Activated T-helper 2 cell treated with anti-CD3 and anti-CD28 coated beads, Interferon-gamma antibody, Interleukin-2, Interleukin-4, amounts not matched to agents 10 μg/mL and 5 μg/mL and 100 μg/mL, durations not matched to agents 14 hours and 24 hours and 36 hours (primary cell): ENCODE measurements at regions of chr20 and their contacts with region 1.

Region 1: DNA sequence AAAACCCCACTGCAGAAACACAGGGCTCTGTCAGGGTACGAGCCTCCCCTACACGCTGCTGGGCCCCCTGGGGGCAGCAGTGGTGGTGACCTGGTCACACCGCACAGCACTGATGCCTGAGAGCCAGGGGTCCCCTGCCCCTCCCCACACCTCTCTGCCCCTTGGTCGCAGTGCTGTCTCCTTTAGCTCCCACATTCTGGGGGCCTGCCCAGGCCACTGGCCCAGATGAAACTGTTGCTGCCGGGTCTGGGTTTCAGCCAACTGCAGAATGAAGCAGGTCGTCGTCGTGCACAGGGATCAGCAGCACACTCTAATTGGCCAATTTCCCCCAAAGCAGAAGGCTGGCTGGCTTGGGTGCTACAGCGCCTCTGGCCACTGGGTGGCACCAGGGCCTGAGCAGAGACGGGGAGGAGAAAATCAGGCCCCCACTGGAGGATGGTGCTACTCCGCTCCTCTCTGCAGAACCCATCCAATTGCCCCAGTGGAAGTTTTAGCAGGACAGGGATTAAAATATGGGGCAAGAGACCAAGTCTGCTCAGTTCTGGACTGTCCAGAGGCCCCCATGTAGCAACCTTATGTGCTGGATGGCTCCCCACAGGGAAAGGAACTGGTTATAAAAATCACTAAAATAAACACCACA is 26.1 kb downstream of the DIDO1 start:
- DNase-seq: peak; percentile 62
- H3K4me3 Mint-ChIP-seq: peak overlapping the region; percentile 47
- H3K27ac Mint-ChIP-seq: peak overlapping the region; percentile 62
- H3K4me1 Mint-ChIP-seq: peaks cover 27% of the 10 kb centered on the region
- H3K27me3 Mint-ChIP-seq: no peaks in the 10 kb centered on the region

Region 2: DNA sequence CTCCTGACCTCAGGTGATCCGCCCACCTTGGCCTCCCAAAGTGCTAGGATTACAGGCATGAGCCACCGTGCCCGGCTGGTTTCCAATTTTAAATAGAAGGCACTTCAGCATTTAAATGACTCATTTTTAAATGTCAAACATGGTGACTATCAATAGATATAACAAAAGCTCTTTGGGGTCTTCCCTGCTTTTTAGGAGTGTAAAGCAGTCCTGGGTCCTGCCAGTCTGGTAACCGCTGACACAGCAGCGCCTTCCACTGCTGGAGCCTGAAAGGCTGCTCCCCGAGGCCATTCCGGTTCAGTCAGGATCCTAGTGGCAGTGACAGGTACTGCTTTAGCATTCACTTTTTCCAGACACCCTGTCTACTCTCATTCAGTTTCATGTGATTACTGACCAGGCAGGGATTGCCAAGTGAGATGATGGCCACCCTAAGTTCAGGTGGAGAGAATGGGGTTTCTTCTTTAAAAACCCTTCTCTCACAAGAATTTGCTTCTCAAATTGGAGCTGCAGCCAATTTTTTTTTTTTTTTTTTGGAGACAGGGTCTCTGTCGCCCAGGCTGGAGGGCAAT is 21.0 kb after region 1 on chr20:
- intact Hi-C with region 1: loop called (anchors 1 kb)
- DNase-seq: peak; percentile 45
- H3K4me3 Mint-ChIP-seq: peak overlapping the region; percentile 61
- H3K27ac Mint-ChIP-seq: peak overlapping the region; percentile 86
- H3K4me1 Mint-ChIP-seq: peaks cover 65% of the 10 kb centered on the region
- H3K27me3 Mint-ChIP-seq: no peaks in the 10 kb centered on the region

Region 3: GRCh38 chr20:62926239-62927104 is 26.3 kb after region 1 on chr20 and contains the start of gene DIDO1:
- intact Hi-C with region 1: loop called (anchors 1 kb)
- DNase-seq: peak; percentile 86
- H3K4me3 Mint-ChIP-seq: peak within 1 kb of the TSS; percentile 96
- H3K27ac Mint-ChIP-seq: peak within 1 kb of the TSS; percentile 95
- H3K4me1 Mint-ChIP-seq: peaks cover 52% of the 10 kb centered on the region
- H3K27me3 Mint-ChIP-seq: no peaks in the 10 kb centered on the region
- total RNA-seq, gene DIDO1: 57.9 and 59.8 TPM in 2 replicates

Region 4: GRCh38 chr20:62953839-62954703 is 53.9 kb after region 1 on chr20:
- intact Hi-C with region 1: loop called (anchors 2 kb)
- DNase-seq: peak; percentile 65
- H3K4me3 Mint-ChIP-seq: peak overlapping the region; percentile 74
- H3K27ac Mint-ChIP-seq: peak overlapping the region; percentile 87
- H3K4me1 Mint-ChIP-seq: peaks cover 13% of the 10 kb centered on the region
- H3K27me3 Mint-ChIP-seq: no peaks in the 10 kb centered on the region

Region 5: GRCh38 chr20:63009045-63009961 is 109.1 kb after region 1 on chr20:
- intact Hi-C with region 1: loop called (anchors 2 kb)
- DNase-seq: peak; percentile 75
- H3K4me3 Mint-ChIP-seq: peak overlapping the region; percentile 21
- H3K27ac Mint-ChIP-seq: peak overlapping the region; percentile 52
- H3K4me1 Mint-ChIP-seq: peaks cover 11% of the 10 kb centered on the region
- H3K27me3 Mint-ChIP-seq: peaks cover 68% of the 10 kb centered on the region